Activated T-helper 1 cell treated with anti-CD3 and anti-CD28 coated beads, Interleukin-12 subunit alpha, Interleukin-12 subunit beta, Interleukin-2, Interleukin-4 antibody, amounts not matched to agents 30 ng/mL and 10 ng/mL and 1 ng/mL, durations not matched to agents 14 hours and 24 hours and 36 hours (primary cell): ENCODE measurements at regions of chr7 and their contacts with region 1.

Region 1: GRCh38 chr7:149209518-149210269 is 14.3 kb downstream of the ZNF282 start:
- DNase-seq: peak; percentile 65
- H3K4me3 Mint-ChIP-seq: peak overlapping the region; percentile 37
- H3K27ac Mint-ChIP-seq: peak overlapping the region; percentile 87
- H3K4me1 Mint-ChIP-seq: peaks cover 13% of the 10 kb centered on the region
- H3K27me3 Mint-ChIP-seq: no peaks in the 10 kb centered on the region

Region 2: DNA sequence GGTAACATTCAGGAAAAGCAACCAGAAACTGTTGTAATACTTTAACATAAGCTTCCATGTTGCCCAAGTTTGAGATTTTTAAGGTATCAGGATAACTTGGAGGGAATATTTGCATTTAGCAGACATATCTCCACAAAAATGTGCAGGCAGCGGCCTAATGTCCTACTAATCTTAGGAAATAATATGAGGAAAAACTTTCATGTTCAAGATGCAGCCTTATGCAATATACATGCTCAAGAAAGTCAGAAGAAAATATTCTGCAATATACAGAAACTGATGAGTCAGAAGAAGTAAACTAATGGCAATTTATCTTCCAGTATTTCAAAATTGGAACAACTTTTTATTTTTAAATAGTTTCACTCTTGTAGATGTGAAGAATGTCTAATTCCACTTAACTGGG is 1082.3 kb before region 1 on chr7:
- intact Hi-C with region 1: no loop called
- DNase-seq: no peak
- H3K4me3 Mint-ChIP-seq: no peak overlapping the region
- H3K27ac Mint-ChIP-seq: no peak overlapping the region
- H3K4me1 Mint-ChIP-seq: no peaks in the 10 kb centered on the region
- H3K27me3 Mint-ChIP-seq: peaks cover 3% of the 10 kb centered on the region

Region 3: DNA sequence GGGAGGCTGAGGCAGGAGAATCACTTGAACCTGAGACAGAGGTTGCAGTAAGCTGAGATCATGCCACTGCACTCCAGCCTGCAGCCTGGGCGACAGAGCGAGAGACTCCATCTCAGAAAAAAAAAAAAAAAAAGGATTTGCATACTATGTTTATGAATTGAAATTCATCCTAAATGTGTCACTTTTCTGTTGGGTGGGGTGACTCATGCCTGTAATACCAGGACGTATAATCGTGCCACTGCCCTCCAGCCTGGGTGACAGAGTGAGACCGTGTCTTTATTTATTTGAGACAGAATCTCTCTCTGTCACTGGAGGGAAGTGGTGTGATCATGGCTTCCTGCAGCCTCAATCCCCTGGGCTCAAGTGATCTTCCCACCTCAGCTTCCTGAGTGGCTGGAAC is 35.5 kb after region 1 on chr7:
- intact Hi-C with region 1: loop called (anchors 5 kb)
- DNase-seq: no peak
- H3K4me3 Mint-ChIP-seq: no peak overlapping the region
- H3K27ac Mint-ChIP-seq: peak overlapping the region; percentile 80
- H3K4me1 Mint-ChIP-seq: peaks cover 47% of the 10 kb centered on the region
- H3K27me3 Mint-ChIP-seq: no peaks in the 10 kb centered on the region